ENCODE measurements at regions of chr21 and their contacts with region 1.

Region 1: GRCh38 chr21:36927719-36928117 is 38.8 kb downstream of the HLCS start:
- DNase-seq: peak; percentile 46
- ATAC-seq: peak; percentile 64
- H3K4me3 Mint-ChIP-seq: no peak overlapping the region
- H3K27ac Mint-ChIP-seq: no peak overlapping the region
- H3K4me1 Mint-ChIP-seq: no peaks in the 10 kb centered on the region
- H3K27me3 Mint-ChIP-seq: no peaks in the 10 kb centered on the region
- CTCF ChIP-seq: peak; percentile 44

Region 2: DNA sequence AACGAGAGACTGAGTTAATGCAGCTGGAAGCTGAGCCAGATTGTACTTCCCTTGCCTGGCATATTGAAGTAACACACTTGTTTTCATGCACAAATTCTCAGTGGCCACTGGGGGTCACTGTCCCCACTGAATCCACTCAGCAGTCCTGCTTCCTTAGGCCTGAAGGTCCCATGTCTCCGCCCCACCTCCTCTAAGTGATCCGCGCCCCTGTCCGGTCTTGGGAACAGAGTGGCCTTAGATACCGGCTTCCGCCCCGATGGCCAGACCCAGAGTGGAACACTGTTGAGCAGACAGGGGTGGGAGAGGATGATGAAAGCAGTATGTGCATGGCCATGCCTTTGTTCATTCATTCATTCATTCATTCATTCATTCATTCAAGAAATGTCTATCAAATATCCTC is 507.7 kb before region 1 on chr21:
- CTCF ChIA-PET with region 1: interaction called, 4 read pairs
- POLR2A ChIA-PET with region 1: no interaction called
- intact Hi-C with region 1: loop called (anchors 1 kb)
- DNase-seq: peak; percentile 29
- ATAC-seq: peak; percentile 71
- H3K4me3 Mint-ChIP-seq: no peak overlapping the region
- H3K27ac Mint-ChIP-seq: no peak overlapping the region
- H3K4me1 Mint-ChIP-seq: no peaks in the 10 kb centered on the region
- H3K27me3 Mint-ChIP-seq: no peaks in the 10 kb centered on the region
- CTCF ChIP-seq: no peak

Region 3: GRCh38 chr21:36630485-36631206 is 297.1 kb before region 1 on chr21:
- CTCF ChIA-PET with region 1: interaction called, 10 read pairs
- POLR2A ChIA-PET with region 1: no interaction called
- intact Hi-C with region 1: no loop called
- DNase-seq: peak; percentile 27
- ATAC-seq: no peak
- H3K4me3 Mint-ChIP-seq: no peak overlapping the region
- H3K27ac Mint-ChIP-seq: no peak overlapping the region
- H3K4me1 Mint-ChIP-seq: no peaks in the 10 kb centered on the region
- H3K27me3 Mint-ChIP-seq: peaks cover 10% of the 10 kb centered on the region
- CTCF ChIP-seq: peak; percentile 38